H1 (cell line): ENCODE measurements at regions of chr12 and their contacts with region 1.

Region 1: GRCh38 chr12:105382771-105383622 is 52.5 kb downstream of the C12orf75 start:
- DNase-seq: peak in 1 of 2 experiments; percentile 49
- H3K4me3 ChIP-seq: peak overlapping the region in 1 of 4 experiments; percentile 43; a peak in 2 of 8 replicates
- H3K27ac ChIP-seq: no peak overlapping the region
- H3K4me1 ChIP-seq: peaks cover 0 to 5% (median 1%) of the 10 kb centered on the region in 4 experiments; a peak in 1 of 7 replicates
- H3K27me3 ChIP-seq: no peaks in the 10 kb centered on the region
- CTCF ChIP-seq: peak in 2 of 3 experiments; percentile 61 to 62; a peak in 3 of 4 replicates
- EP300 ChIP-seq: no peak
- POLR2A ChIP-seq: no peak
- RAD21 ChIP-seq: peak; percentile 92

Region 2: DNA sequence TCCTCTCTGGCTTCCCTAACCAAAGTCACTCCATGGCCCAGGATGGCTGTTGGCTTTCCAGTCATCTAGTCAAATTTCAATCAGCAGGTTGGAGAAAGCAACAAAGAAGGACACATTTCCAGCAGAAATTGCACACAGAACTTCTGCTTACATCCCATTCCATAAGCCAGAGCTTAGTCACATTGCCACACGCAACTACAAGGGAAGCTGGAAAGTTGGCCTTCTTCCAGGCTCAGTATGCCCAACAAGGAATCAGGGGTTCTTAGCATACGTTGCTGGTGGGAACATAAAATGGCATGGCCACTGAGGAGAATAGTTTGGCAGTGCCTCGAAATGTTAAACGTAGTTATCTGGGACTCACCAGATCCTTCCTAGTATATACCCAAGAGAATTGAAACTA is 137.7 kb before region 1 on chr12:
- CTCF ChIA-PET with region 1: no interaction called
- POLR2A ChIA-PET with region 1: no interaction called
- DNase-seq: no peak
- H3K4me3 ChIP-seq: no peak overlapping the region
- H3K27ac ChIP-seq: no peak overlapping the region
- H3K4me1 ChIP-seq: no peaks in the 10 kb centered on the region
- H3K27me3 ChIP-seq: no peaks in the 10 kb centered on the region
- CTCF ChIP-seq: no peak
- EP300 ChIP-seq: no peak
- POLR2A ChIP-seq: no peak
- RAD21 ChIP-seq: no peak

Region 3: GRCh38 chr12:105319691-105320209 is 63.2 kb before region 1 on chr12:
- CTCF ChIA-PET with region 1: interaction called, 15 read pairs
- POLR2A ChIA-PET with region 1: no interaction called
- DNase-seq: no peak
- H3K4me3 ChIP-seq: no peak overlapping the region
- H3K27ac ChIP-seq: no peak overlapping the region
- H3K4me1 ChIP-seq: peaks cover 0 to 2% (median 0%) of the 10 kb centered on the region in 4 experiments; a peak in 1 of 7 replicates
- H3K27me3 ChIP-seq: no peaks in the 10 kb centered on the region
- CTCF ChIP-seq: peak; percentile 28 to 51 (median 32)
- EP300 ChIP-seq: no peak
- POLR2A ChIP-seq: no peak
- RAD21 ChIP-seq: peak; percentile 33 to 57

Region 4: DNA sequence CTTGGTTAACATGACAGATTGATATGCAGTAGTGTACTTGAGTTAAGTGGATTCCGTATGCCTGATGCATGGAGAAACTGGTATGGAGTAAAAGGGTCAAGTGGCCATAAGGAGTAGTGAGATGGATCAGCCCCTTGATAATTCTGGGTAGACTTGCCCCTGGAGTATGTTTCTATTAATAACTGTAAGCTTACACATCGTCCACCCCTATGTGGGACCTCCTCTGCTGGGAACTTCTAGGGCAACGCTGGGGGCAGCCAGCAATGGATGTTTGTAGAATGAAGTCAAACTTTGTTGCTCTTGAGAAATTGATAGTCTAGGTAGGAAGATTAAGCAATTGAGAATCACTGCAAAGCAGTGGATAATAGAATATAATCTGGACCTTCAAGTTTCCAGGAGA is 49.0 kb before region 1 on chr12:
- CTCF ChIA-PET with region 1: interaction called, 10 read pairs
- POLR2A ChIA-PET with region 1: no interaction called
- DNase-seq: no peak
- H3K4me3 ChIP-seq: no peak overlapping the region
- H3K27ac ChIP-seq: no peak overlapping the region
- H3K4me1 ChIP-seq: peaks cover 3 to 15% (median 9%) of the 10 kb centered on the region in 4 experiments
- H3K27me3 ChIP-seq: peaks cover 0 to 9% (median 6%) of the 10 kb centered on the region in 4 experiments; a peak in 6 of 7 replicates
- CTCF ChIP-seq: no peak
- EP300 ChIP-seq: no peak
- POLR2A ChIP-seq: no peak
- RAD21 ChIP-seq: no peak

Region 5: GRCh38 chr12:105534068-105534467 is 151.1 kb after region 1 on chr12:
- CTCF ChIA-PET with region 1: no interaction called
- POLR2A ChIA-PET with region 1: no interaction called
- DNase-seq: no peak
- H3K4me3 ChIP-seq: no peak overlapping the region
- H3K27ac ChIP-seq: no peak overlapping the region
- H3K4me1 ChIP-seq: no peaks in the 10 kb centered on the region
- H3K27me3 ChIP-seq: no peaks in the 10 kb centered on the region
- CTCF ChIP-seq: no peak
- EP300 ChIP-seq: no peak
- POLR2A ChIP-seq: no peak
- RAD21 ChIP-seq: no peak